Panc1 (cell line): ENCODE measurements at regions of chr11 and their contacts with region 1.

Region 1: GRCh38 chr11:76919887-76920746 is 59.4 kb downstream of the ACER3 start:
- DNase-seq: peak; percentile 70
- ATAC-seq: peak; percentile 95
- H3K4me3 ChIP-seq: 0 out of 4 replicates have a peak overlapping the region, but pooled peaks of 1 of the 2 experiments have one; percentile 19
- H3K27ac ChIP-seq: no peak overlapping the region
- H3K4me1 ChIP-seq: peaks cover 7% of the 10 kb centered on the region
- H3K27me3 ChIP-seq: no peaks in the 10 kb centered on the region
- CTCF ChIP-seq: peak; percentile 99

Region 2: DNA sequence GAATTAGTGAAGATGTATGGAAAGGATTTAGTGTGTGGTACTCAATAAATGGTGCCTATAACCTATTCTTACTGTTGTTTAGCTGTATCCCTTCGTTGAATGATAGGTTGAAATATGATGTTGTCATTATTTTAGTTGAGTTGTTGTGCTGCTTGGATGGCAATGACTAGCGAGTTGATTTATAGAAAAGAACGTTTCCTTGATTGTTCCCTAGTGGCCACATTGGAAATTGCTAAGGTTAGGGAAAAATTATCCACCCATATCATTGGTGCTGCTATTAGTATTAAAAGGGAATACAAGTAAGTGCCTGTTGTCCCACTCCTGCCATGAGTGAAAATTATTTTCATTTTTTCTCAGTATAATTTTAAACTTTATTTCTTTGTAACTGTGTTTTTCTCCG is 460.8 kb before region 1 on chr11:
- CTCF ChIA-PET with region 1: no interaction called
- POLR2A ChIA-PET with region 1: no interaction called
- in situ Hi-C with region 1: no loop called
- intact Hi-C with region 1: no loop called
- DNase-seq: no peak
- ATAC-seq: no peak; the same call in 1 of the 2 replicates
- H3K4me3 ChIP-seq: no peak overlapping the region
- H3K27ac ChIP-seq: no peak overlapping the region
- H3K4me1 ChIP-seq: peaks cover 3% of the 10 kb centered on the region; the same call in 1 of the 2 replicates
- H3K27me3 ChIP-seq: no peaks in the 10 kb centered on the region
- CTCF ChIP-seq: peak; percentile 64; the same call in 1 of the 2 replicates

Region 3: GRCh38 chr11:76734456-76735420 is 185.4 kb before region 1 on chr11:
- CTCF ChIA-PET with region 1: interaction called, 49 read pairs
- POLR2A ChIA-PET with region 1: no interaction called
- in situ Hi-C with region 1: no loop called
- intact Hi-C with region 1: loop called (anchors 1 kb)
- DNase-seq: no peak
- ATAC-seq: 0 out of 2 replicates have a peak, but pooled peaks have one; percentile 5
- H3K4me3 ChIP-seq: no peak overlapping the region
- H3K27ac ChIP-seq: no peak overlapping the region
- H3K4me1 ChIP-seq: no peaks in the 10 kb centered on the region
- H3K27me3 ChIP-seq: no peaks in the 10 kb centered on the region
- CTCF ChIP-seq: no peak

Region 4: GRCh38 chr11:76860539-76861475 is 59.3 kb before region 1 on chr11 and contains the start of gene ACER3:
- CTCF ChIA-PET with region 1: interaction called, 3 read pairs
- POLR2A ChIA-PET with region 1: no interaction called
- in situ Hi-C with region 1: no loop called
- intact Hi-C with region 1: loop called (anchors 5 kb)
- DNase-seq: peak; percentile 63
- ATAC-seq: peak; percentile 99
- H3K4me3 ChIP-seq: peak within 1 kb of the TSS; percentile 67 to 71
- H3K27ac ChIP-seq: peak within 1 kb of the TSS; percentile 89
- H3K4me1 ChIP-seq: peaks cover 13% of the 10 kb centered on the region
- H3K27me3 ChIP-seq: no peaks in the 10 kb centered on the region
- CTCF ChIP-seq: peak; percentile 50
- total RNA-seq, gene ACER3: 41.8 TPM

Region 5: DNA sequence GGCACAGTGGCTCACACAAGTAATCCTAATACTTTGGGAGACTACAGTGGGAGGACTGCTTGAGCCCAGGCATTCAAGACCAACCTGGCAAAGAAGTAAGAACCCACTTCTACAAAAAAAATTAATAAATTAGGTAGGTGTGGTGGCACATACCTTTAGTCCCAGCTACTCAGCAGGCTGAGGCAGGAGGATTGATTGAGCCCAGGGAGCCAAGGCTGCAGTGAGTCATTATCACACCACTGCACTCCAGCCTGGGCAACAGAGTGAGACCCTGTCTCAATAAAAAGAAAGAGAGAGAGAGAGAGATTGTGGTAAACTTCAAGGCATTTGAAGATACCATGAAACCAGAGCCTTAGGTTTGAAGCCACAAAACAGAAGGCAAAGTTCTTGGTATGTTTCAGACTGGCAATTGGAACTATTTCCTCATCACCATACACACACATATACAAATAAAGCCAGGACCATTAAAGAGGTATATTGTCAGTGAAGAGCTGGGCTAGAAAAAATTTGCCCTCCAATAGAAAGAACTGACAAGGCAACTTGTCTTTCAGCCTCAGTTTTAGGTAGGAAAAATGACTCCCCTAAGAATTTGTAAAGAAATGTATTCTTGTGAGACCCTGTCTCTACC is 89.5 kb after region 1 on chr11:
- CTCF ChIA-PET with region 1: no interaction called
- POLR2A ChIA-PET with region 1: no interaction called
- in situ Hi-C with region 1: no loop called
- intact Hi-C with region 1: no loop called
- DNase-seq: no peak
- ATAC-seq: no peak
- H3K4me3 ChIP-seq: no peak overlapping the region
- H3K27ac ChIP-seq: no peak overlapping the region
- H3K4me1 ChIP-seq: no peaks in the 10 kb centered on the region
- H3K27me3 ChIP-seq: no peaks in the 10 kb centered on the region
- CTCF ChIP-seq: no peak

Region 6: DNA sequence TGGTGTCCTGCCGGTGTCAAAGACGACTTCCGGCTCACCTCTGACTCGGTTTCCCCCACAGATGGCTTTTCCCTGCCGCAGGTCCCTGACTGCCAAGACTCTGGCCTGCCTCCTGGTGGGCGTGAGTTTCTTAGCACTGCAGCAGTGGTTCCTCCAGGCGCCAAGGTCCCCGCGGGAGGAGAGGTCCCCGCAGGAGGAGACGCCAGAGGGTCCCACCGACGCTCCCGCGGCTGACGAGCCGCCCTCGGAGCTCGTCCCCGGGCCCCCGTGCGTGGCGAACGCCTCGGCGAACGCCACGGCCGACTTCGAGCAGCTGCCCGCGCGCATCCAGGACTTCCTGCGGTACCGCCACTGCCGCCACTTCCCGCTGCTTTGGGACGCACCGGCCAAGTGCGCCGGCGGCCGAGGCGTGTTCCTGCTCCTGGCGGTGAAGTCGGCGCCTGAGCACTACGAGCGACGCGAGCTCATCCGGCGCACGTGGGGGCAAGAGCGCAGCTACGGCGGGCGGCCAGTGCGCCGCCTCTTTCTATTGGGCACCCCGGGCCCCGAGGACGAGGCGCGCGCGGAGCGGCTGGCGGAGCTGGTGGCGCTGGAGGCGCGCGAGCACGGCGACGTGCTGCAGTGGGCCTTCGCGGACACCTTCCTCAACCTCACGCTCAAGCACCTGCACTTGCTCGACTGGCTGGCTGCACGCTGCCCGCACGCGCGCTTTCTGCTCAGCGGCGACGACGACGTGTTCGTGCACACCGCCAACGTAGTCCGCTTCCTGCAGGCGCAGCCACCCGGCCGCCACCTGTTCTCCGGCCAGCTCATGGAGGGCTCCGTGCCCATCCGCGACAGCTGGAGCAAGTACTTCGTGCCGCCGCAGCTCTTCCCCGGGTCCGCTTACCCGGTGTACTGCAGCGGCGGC is 119.6 kb after region 1 on chr11:
- CTCF ChIA-PET with region 1: interaction called, 19 read pairs
- POLR2A ChIA-PET with region 1: no interaction called
- in situ Hi-C with region 1: no loop called
- intact Hi-C with region 1: loop called (anchors 5 kb)
- DNase-seq: no peak
- ATAC-seq: peak; percentile 75
- H3K4me3 ChIP-seq: peak overlapping the region; percentile 43 to 59
- H3K27ac ChIP-seq: peak overlapping the region; percentile 18; the same call in 1 of the 2 replicates
- H3K4me1 ChIP-seq: peaks cover 28% of the 10 kb centered on the region
- H3K27me3 ChIP-seq: no peaks in the 10 kb centered on the region
- CTCF ChIP-seq: peak; percentile 92

Region 7: DNA sequence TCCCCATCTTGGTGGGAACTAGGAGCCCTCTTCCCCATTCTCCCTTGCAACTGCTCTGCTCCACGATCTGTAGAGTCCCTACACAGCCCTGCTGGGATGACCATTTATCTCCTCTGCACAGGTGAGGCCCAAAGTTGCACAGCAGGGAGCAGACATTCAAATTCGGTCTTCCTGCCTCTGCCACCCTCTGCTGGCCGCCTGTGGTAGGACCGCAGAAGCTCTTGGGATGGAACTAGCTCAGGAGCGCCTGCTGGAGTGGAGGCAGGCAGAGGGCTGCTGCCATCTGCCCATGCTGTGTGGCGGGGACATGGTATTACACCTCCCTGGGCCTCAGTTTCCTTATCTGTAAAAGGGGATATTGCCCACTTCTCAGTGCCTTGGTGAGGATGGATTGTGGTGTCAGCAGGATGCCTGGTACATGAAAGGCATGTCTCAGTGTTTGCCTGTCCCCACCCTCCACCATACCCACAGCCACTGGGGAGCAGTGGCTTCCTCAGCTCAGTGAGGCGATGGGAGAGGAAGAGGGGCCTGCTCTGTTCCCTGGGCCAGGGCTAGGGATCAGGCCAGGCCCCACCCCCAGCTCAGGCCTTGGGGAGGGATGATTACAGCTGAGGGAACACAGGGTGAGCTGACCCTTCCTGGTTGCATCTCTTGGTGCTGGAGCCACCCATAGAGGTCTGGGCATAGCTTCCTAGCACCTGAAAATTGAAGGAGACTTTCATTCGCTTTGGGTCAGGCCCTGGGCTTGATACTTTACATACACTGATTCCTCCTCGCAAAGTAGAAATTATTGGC is 171.2 kb after region 1 on chr11:
- CTCF ChIA-PET with region 1: interaction called, 13 read pairs
- POLR2A ChIA-PET with region 1: no interaction called
- in situ Hi-C with region 1: no loop called
- intact Hi-C with region 1: no loop called
- DNase-seq: peak; percentile 50
- ATAC-seq: peak; percentile 87
- H3K4me3 ChIP-seq: no peak overlapping the region
- H3K27ac ChIP-seq: no peak overlapping the region
- H3K4me1 ChIP-seq: peaks cover 18% of the 10 kb centered on the region; the same call in 1 of the 2 replicates
- H3K27me3 ChIP-seq: no peaks in the 10 kb centered on the region
- CTCF ChIP-seq: peak; percentile 99